Right ventricle myocardium inferior (tissue), 1 donor: ENCODE measurements at regions of chr14 and their contacts with region 1.

Region 1: DNA sequence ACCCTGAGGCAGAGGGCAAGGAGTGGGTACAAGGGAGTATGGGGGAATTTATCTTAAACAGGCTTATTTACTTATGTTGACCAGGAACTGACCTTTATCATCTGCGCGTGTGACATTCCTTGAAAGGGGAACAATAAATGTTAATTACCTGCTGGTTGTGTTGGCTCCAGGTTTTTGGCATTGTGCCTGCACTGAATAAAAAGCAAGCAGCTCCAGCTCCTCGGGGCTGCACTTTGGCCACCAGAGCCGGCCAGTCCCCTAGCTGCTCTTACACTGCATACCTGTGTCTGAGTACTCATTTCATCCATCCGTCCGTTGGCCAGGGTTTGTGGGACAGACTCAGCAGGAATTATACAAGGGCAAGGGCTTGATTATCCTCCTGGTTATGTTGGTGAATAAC is 68.8 kb upstream of the GTF2A1 start:
- DNase-seq: no peak
- ATAC-seq: no peak

Region 2: GRCh38 chr14:81303248-81304221 is 14.0 kb after region 1 on chr14:
- intact Hi-C with region 1: loop called (anchors 2 kb)
- DNase-seq: peak; percentile 74
- ATAC-seq: no peak